Right ventricle myocardium inferior (tissue), 1 donor: ENCODE measurements at regions of chr6 and their contacts with region 1.

Region 1: DNA sequence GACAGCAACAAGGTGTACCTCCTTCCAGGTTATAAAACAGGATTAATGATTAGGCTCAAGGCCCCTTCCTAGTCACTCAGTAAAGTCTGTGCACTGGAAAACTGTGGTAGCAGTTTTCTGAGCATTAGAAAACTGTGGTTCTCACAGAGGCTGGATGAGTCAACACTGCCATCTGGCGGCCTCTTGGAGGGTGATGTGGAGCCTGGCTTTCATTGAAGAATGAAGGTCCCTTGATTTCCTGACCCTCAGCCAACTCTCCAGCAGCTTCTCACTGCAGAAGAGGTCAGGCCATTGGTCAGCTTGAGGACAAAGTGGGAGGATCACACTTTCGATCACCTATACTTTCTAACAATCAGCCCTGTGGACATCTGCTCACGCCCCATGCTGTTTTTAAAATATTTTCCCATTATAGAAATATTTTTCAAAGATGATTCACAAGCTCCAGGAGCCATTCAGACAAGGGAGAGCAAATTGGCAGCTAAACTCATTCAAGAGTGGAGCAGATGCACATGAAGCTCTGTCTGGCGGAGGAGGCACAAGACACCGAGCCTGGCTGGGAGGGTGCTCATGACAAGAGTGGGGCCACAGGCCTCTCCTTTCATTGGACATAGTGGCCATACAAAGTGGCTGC is 23.2 kb downstream of the PSMB1 start:
- DNase-seq: peak; percentile 79
- ATAC-seq: peak; percentile 81

Region 2: DNA sequence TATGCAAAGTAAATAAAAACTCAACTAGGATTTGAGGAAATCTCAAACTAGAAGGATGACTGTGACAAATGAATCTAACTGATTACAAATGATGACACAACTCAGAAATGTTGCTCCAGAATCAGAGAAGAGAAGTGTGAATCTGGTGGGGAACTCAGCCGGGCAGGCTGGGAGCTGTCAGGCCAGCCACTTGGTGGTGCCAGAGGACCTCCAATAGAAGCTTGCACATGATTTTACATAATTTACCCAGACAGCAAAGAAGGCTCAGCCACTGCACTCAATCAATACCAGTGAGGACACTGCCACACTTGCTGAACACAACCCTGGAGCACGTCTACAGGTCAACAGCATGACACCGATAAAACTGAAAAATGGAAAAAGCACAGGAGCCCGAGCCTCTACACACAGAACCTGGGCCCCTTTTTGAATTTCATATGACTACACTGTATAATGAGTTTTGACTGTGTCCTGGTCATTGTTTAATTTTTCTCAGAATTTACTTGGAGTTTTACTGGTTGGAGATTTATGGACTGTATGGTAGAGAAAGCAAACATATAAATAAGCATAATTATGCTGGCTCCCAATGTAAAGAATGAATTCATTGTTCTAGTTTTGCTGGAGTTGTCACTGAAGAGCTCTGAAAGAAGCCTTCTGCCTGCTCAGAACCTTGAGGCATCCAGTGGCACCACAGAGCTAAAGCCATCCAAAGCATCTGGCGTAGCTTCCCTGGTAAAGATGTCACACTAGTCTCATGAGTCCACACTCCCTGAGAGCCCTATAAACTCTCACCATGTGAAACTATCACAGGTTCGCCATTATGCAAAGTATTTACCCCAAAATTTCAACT is 1572.8 kb before region 1 on chr6:
- intact Hi-C with region 1: loop called (anchors 10 kb)
- DNase-seq: no peak
- ATAC-seq: peak; percentile 81

Region 3: DNA sequence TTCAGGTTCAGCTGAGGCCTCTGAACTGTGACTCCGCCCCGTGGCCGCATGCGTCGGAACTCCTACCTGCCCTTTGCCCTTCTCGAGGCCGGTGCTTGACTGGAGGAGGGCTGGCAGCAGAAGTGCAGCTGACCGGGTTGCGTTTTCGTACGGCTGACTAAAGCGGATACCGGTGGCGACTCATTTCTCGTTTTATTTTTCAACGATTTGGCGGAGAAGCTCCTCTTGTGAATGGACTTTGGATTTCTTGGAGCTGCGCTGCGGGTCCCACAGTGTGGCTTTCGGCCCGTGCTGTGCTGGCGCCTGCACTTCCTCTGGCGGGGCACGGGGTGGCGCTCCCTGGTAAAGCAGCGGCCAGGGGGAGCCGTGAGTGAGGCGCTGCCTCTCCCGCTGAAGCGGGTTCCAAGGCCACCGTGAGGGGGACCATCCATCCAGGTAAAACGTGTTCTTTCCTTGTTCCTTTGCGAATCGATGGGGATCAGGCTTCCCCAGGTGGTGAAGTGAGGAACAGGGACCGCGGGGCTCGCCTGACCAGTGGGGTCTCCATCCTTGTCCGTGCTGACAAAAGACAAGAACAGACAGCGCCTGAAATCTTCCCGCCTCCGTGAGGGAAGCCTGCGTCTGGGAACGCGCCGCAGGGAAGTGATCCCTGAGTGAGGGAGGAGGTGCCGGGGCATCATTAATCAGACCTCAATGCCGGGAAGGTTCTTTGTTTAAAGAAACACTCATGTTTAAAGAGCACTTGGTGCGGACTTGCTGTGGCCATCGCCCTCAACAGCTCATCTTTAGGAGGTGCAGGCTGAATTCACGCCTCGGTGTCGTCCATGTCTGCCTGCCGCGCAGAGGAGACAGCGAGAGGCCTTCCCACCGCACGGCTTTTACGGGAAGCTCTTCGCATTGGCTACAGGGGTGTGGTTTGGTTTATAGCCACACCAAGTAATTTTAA is 739.7 kb before region 1 on chr6:
- intact Hi-C with region 1: loop called (anchors 1 kb)
- DNase-seq: peak; percentile 85
- ATAC-seq: peak; percentile 95

Region 4: DNA sequence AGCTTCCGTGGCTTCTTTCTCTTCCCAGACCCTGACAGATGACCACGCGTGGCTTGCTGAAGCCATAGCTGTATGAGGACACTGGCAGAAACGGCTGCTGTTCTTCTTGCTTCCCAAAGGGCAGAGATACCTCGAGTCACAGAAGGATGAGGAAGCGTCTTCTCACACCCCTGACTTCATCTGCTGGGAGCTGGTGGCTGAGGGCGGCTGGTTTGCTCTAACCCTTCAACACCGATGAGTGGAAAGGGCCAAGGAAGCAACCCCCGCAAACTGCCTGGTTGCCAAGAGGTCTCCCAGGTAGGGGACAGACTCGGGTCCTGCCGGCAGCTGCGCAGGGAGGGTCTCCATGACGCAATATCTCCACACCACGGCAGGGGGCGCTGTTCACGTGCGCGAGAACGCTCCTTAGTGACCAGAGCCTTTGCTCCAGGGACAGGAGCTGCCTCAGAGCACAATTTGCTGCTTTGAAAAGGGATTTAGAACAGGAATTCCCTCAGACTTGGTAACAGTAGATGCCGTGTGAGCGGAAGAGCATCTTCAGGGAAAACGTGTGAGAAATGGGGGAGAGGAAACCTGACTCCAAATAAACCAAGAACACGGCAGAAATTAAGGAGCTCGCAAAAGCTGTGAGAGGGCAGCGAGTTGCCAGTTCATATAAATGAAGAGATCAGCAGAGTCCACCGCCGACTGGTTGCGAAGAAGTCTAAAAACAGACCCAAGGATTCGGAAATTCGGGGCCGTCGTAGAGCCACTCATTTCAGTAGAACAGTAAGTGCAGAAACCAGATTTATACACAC is 698.3 kb before region 1 on chr6:
- intact Hi-C with region 1: loop called (anchors 1 kb)
- DNase-seq: peak; percentile 88
- ATAC-seq: peak; percentile 79

Region 5: GRCh38 chr6:169959136-169960002 is 570.6 kb before region 1 on chr6:
- intact Hi-C with region 1: loop called (anchors 5 kb)
- DNase-seq: no peak
- ATAC-seq: no peak

Region 6: DNA sequence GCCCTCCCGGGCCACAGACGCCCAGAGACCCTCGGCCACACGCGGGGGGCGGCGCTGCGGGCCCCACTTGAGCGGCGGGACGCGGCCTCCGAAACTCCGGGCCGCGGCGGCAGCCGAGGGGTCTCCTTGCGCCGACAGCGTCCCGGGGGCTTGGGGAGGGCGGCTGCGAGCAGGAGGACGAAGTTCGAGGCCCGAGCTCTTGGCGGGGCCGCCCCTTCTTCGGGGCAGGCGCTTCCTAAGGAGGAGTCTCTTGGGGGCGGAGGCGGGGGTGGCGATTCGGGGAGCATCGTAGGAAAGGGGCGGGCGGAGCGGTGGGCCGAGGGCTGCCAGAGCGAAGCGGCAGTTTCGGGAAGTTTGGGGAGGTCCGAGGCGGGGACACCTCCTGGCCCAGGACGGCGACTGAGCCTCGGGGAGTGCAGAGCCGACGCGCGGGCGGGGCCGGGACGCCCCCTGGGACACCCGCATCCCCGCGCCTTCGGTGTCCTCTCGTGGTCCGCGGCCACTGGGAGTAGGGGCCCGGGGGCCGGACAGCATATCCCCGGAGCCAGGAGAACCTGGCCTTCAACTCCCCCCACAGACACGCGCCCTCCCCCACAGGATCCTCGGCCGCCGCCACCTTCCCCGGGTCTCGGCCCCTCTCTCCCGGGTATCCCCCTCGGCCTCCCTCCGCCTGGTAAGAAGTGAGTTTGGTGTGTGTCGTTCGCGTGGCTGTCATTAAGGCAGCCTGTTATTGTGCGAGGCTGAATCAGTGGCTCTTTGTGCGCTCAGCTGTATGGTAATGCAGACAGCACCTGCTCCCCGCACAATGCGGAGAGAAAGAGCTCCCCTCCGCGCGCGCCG is 238.5 kb before region 1 on chr6:
- intact Hi-C with region 1: loop called (anchors 5 kb)
- DNase-seq: peak; percentile 89
- ATAC-seq: peak; percentile 49